GM13977 (cell line): ENCODE measurements at regions of chr2 and their contacts with region 1.

Region 1: GRCh38 chr2:219206442-219207253 is at the start of gene ZFAND2B:
- DNase-seq: peak; percentile 99
- CTCF ChIP-seq: no peak

Region 2: DNA sequence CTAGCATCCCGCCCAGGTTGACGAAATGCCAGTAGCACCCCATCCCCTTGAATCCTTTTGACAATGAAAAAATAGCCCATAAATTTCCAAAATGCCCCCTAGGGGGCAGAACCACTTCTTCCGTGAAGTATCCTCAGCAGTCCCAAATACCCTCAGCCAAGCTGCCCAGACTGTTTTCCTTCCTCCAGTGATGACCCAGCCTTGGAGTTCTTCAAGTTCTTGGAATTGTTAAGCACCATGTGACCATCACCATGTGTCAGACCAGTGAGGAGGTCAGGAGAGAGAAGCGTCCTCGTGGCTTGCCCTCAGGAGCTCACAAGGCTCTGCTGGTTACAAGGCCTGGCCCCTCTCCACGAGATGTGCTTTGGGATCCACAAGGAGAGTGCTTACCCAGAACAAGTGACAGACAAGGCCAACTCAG is 35.4 kb before region 1 on chr2:
- in situ Hi-C with region 1: loop called (anchors 5 kb)
- DNase-seq: peak; percentile 44
- CTCF ChIP-seq: peak; percentile 58

Region 3: GRCh38 chr2:219541611-219542180 is 335.0 kb after region 1 on chr2:
- in situ Hi-C with region 1: no loop called
- DNase-seq: peak; percentile 94
- CTCF ChIP-seq: peak; percentile 89